ENCODE measurements at regions of chr9 and their contacts with region 1.

Region 1: DNA sequence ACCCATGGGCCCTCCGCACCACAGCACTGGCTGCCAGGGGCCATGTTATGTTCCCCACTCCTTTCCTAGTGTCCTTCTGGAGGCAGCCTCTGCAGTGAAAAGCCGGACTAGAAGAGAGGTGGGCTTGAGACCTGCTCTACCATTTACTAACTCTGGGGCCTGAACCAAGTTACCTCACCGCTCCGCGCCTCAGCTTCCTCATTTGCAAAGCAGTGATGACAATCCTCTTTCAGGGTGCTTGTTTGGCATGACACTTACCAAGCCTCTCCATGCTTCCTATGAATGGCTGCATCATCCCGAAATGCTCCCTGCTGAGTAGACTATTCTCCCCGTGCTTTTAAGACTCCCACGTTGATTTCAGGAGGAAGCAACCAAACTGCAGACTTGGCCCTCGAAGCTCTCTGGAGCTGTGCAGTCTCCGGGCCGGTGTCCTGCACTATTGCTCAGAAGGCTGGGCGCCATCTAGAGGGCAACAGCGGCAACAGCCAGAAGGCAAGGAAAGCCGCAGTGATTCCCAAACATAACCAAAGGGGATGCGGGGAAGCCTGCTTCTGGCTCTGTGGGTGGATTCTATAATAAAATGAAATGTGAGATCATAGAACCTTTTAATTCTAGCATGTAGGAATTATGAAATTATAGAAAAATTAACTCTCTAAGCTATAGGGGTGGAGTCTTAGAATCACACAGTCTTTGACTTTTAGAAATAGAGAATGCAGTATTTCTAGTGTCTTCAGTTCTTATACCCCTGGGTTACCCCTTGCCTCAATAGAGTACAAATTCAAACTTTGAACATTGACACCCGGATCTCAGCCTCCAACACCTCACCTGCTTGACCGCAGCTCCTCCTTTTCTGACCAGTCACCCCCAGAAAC is 599.8 kb upstream of the BRINP1 start:
- DNase-seq: peak; percentile 43
- ATAC-seq: peak; percentile 59
- H3K4me3 ChIP-seq: no peak overlapping the region
- H3K27ac ChIP-seq: no peak overlapping the region
- H3K4me1 ChIP-seq: no peaks in the 10 kb centered on the region
- H3K27me3 ChIP-seq: no peaks in the 10 kb centered on the region
- CTCF ChIP-seq: peak; percentile 81

Region 2: DNA sequence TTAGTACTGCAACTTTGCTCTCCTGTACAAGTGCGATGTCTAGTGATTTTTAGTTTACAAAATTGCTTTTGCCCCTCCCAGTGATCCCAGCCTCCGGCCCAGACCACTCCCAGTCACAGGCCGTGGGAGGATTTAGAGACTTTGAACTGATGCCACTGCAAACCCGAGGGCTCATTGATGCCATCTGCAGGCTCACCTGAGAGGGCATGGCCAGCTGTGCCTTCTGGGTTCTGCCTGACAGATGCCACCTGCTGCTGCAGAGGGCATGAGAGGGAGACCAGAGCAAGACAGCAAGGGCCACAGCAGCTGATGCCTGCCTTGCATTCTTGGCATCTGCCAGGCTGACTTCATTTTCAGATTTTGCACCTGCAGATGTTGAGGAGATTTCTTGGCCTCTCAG is 17.1 kb after region 1 on chr9:
- CTCF ChIA-PET with region 1: no interaction called
- POLR2A ChIA-PET with region 1: no interaction called
- intact Hi-C with region 1: no loop called
- DNase-seq: no peak
- ATAC-seq: no peak
- H3K4me3 ChIP-seq: no peak overlapping the region
- H3K27ac ChIP-seq: no peak overlapping the region
- H3K4me1 ChIP-seq: no peaks in the 10 kb centered on the region
- H3K27me3 ChIP-seq: no peaks in the 10 kb centered on the region
- CTCF ChIP-seq: no peak

Region 3: GRCh38 chr9:120477521-120478001 is 508.5 kb after region 1 on chr9:
- CTCF ChIA-PET with region 1: no interaction called
- POLR2A ChIA-PET with region 1: no interaction called
- intact Hi-C with region 1: loop called (anchors 10 kb)
- DNase-seq: peak; percentile 63
- ATAC-seq: peak; percentile 93
- H3K4me3 ChIP-seq: no peak overlapping the region
- H3K27ac ChIP-seq: no peak overlapping the region
- H3K4me1 ChIP-seq: no peaks in the 10 kb centered on the region
- H3K27me3 ChIP-seq: no peaks in the 10 kb centered on the region
- CTCF ChIP-seq: peak; percentile 80